ENCODE measurements at regions of chr16 and their contacts with region 1.

Region 1: DNA sequence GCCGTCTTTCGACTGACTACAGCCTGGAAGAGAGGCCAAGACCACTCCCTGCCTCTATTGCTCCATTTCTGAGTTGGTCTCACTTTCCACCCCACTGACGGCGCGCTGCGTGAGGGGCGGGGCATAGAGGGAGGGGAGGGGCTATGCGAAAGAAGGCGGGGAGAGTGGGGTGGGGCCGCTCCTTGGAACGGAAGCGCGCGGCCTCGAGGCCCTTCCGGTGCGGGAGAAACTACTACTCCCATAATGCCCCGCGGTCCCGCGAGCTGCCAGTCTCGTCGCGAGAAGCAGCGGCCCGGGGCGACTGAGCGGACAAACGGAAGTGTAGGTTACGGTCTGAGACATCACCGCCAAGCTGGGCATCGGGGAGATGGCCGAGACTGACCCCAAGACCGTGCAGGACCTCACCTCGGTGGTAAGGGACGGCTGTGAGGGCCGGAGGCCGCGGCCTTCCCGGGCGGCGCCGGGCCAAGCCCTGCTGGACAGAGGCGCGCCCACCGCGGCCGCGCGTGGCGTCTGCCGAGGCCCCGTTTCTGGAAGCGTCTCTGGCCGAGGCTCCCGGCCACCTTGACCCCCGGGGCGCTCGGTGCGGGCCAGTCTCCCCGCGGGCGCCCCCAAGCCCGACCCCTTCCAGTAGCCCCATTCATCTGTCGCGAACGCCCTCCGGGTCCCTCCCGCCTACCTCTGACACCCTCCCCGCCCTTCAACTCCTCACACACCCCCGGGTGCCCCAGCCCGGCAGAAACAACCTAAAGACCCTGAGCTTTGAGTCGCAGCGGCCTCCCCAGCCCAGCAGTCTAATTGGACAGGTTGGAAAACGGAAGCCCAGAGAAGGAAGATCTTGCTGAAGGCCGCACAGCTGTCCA is at the start of gene HSBP1:
- DNase-seq: peak; percentile 91
- H3K4me3 Mint-ChIP-seq: peak within 1 kb of the TSS; percentile 98
- H3K27ac Mint-ChIP-seq: peak within 1 kb of the TSS; percentile 95
- H3K4me1 Mint-ChIP-seq: peaks cover 30% of the 10 kb centered on the region
- H3K27me3 Mint-ChIP-seq: peaks cover 2% of the 10 kb centered on the region
- total RNA-seq, gene HSBP1: 112 and 115 TPM in 2 replicates

Region 2: GRCh38 chr16:83826146-83826913 is 18.4 kb after region 1 on chr16:
- intact Hi-C with region 1: loop called (anchors 1 kb)
- DNase-seq: peak; percentile 70
- H3K4me3 Mint-ChIP-seq: no peak overlapping the region
- H3K27ac Mint-ChIP-seq: no peak overlapping the region
- H3K4me1 Mint-ChIP-seq: no peaks in the 10 kb centered on the region
- H3K27me3 Mint-ChIP-seq: peaks cover 6% of the 10 kb centered on the region

Region 3: DNA sequence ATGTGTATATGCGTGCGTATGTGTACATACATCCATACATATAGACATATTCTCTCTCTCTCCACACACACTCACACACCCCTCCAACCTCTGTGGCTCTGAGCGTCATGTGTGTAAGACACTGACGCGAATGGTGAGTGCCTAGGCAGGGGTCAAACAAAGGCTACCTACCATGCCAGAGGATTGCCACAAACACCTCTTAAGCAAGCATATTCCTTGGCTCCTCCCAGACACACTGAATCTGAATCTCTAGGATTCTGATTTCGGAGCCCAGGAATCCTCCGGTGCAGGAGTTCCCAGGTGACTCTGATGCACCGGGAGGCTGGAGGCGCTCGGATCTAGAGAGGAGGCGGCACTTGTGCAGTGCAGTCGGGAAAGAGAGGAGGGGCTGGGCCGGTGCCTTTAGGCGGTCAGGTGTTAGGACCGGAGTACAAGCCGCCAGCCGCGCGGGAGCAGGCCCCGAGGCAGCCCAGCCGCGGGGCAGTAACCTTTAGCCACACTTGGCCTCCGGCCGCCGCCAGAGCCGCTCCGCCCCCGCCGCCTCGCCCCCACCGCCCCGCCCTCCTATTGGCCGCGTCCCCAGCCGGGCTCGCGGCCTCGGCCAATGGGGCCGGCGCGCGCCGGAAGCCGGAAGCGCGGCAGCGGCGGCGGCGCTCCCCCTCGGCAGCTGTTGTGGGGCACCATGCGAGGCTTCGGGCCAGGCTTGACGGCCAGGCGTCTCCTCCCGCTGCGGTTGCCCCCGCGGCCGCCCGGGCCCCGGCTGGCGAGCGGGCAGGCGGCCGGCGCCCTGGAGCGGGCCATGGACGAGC is 90.7 kb after region 1 on chr16 and contains the start of gene MLYCD:
- intact Hi-C with region 1: loop called (anchors 1 kb)
- DNase-seq: peak; percentile 73
- H3K4me3 Mint-ChIP-seq: peak within 1 kb of the TSS; percentile 94
- H3K27ac Mint-ChIP-seq: peak within 1 kb of the TSS; percentile 77
- H3K4me1 Mint-ChIP-seq: peaks cover 27% of the 10 kb centered on the region
- H3K27me3 Mint-ChIP-seq: peaks cover 10% of the 10 kb centered on the region
- total RNA-seq, gene MLYCD: 5.0 and 6.1 TPM in 2 replicates

Region 4: DNA sequence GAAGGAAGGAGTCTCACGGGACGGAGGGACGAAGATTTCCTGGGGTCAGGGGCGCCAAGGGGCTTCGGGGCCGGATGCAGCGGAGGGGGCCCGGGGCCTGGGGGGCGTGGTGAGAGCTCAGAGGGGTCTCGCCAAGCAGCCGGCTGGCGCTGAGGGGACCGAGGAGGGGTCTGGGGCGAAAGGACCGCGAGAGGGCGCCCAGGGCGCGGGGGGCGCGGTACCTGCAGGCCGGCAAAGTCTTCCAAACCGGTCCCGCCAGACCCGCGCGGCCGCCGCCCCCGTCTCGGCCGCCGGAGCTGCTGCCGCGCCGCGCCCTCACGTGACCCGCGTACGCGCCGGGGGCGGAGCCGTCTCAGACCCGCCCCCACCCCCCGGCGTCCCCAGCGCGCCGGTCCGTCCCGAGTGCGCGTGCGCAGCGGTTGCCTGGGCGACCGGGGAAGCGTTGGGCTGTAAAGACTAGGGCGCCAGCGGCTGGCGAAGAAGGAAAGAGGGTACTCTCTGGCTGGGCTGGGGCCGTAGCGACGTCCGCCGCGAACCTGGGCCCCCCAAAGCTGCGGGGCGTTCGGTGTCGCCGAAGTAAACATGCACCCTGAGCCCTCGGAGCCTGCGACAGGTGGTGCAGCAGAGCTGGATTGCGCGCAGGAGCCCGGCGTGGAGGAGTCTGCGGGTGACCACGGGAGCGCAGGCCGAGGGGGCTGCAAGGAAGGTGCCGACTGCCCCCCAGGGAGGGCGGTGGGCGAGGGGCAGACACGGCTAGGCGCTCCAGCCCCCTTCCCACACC is 337.1 kb after region 1 on chr16 and contains the starts of genes DNAAF1 and HSDL1:
- intact Hi-C with region 1: loop called (anchors 1 kb)
- DNase-seq: peak; percentile 92
- H3K4me3 Mint-ChIP-seq: peak within 1 kb of the TSS; percentile 97
- H3K27ac Mint-ChIP-seq: peak within 1 kb of the TSS; percentile 86
- H3K4me1 Mint-ChIP-seq: peaks cover 7% of the 10 kb centered on the region
- H3K27me3 Mint-ChIP-seq: peaks cover 19% of the 10 kb centered on the region
- total RNA-seq, gene DNAAF1: not detected in 2 replicates
- total RNA-seq, gene HSDL1: 19.2 and 23.1 TPM in 2 replicates

Region 5: DNA sequence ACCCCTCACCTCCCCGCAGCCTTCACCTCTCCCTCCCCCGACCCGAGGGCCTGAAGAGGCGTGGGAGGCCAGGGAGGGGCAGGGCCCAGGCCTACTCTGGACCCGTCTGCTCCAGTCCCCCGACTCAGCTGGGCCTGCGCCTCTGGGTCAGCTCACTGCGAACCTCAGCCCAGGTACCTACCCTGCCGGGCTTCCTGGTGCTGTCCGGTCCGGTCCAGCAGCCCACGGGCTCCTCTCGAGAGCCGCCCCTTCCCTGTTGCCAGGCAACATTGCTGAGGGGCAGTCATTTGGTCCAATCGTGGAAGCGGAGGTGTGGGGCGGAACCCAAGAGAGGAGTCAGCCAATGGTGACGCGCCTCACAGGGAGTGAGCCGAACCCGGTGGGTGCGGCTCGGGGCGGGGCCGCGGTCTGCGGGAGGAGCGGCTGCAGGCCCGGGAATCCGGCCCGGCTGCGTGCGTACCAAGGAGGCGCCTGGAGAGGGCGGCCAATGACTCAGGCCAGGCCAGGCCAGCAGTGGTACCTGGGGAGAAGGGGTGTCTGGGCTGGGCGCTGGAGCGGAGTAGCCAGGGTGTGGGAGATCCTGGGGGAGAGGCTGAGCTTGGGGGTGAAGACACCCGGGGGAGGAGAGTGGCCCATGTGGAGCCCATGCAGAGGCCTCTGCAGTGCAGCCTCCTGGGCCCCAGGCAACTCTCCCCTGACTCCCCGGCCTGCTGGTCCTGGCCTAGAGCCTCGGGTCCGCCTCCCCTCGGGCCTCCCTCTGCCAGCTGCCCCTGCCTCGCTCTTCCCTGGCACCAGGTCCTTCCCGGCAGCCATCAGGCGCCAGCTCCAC is 696.7 kb after region 1 on chr16 and contains the start of gene MEAK7:
- intact Hi-C with region 1: loop called (anchors 1 kb)
- DNase-seq: peak; percentile 97
- H3K4me3 Mint-ChIP-seq: peak within 1 kb of the TSS; percentile 85
- H3K27ac Mint-ChIP-seq: peak within 1 kb of the TSS; percentile 81
- H3K4me1 Mint-ChIP-seq: peaks cover 46% of the 10 kb centered on the region
- H3K27me3 Mint-ChIP-seq: no peaks in the 10 kb centered on the region
- total RNA-seq, gene MEAK7: 10.6 and 10.9 TPM in 2 replicates